Aorta (tissue), 5 donors: ENCODE measurements at regions of chr15 and their contacts with region 1.

Region 1: DNA sequence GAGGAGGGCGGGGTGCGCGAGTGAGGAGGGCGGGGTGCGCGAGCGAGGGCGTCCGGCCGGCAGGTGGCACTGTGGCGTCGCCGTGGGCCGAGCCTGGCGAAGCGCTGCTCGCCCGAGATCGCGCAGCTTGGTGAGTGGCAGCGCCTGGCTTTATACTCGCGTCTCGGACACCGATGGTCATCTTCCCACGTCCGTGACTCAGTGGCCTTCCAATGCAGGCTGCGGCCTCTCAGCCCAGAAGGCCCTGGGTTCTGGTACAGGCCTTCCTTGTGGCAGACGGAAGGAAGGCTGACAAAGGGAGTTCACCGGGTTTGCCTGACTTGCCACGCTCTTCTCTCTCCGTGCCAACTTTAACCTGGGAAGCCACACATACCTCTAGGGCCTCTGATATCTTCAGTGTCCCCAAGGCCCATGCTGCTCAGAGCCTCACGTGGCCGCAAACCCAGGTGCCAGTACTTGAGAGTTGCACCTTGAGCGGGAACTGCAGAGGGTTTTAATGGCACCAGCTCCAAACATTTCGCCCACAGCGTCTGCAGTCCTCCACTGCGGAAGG is 195.3 kb upstream of the LYSMD4 start:
- DNase-seq: peak; percentile 89 to 92
- ATAC-seq: peak; percentile 97
- H3K4me3 ChIP-seq: peak overlapping the region in 1 of 2 donors; percentile 12
- H3K27ac ChIP-seq: peak overlapping the region in 1 of 2 donors; percentile 43
- H3K4me1 ChIP-seq: no peaks in the 10 kb centered on the region
- H3K27me3 ChIP-seq: no peaks in the 10 kb centered on the region

Region 2: DNA sequence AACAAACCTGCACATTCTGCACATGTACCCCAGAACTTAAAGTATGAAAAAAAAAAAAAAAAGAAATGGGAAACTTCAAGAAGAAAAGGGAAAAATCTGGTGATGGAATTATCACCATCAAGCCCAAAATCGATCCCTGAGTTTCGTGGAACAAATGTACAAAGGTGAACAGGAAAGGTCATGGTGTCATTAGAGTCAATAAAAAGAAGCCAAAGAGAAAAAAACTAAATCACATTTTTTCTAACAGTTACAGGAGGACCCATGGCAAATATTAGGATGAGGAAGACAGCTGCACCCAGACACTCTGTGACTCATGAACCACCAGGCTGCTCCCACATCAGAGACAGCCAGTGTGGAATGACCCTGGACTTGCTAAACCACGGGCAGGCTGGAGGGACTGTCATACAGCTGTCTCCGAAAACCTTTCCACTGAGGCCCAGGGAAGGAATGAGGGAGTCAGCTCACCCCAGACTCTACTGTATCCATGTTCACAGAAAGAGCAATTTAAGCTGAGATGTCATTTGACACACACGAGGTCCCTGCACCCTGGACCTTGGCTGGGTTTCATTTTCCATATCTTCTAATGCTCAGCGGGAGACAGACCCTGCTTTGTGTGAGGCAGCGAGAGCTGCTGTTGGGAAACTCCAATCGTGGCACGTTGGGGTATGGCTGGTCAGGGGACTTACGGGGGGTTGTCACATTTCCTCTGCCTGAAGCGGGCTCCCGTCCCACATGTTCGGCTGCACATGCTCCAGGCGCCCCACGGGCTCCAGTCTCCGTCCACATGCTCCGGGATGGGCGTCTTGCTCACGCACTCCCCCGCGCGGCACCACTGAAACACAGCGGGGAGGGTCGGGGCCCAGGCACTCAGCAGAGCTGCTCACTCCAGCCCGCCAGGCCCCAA is 203.1 kb after region 1 on chr15:
- intact Hi-C with region 1: loop called in 1 of 2 experiments (anchors 2 kb)
- DNase-seq: peak; percentile 82 to 83
- ATAC-seq: peak; percentile 75
- H3K4me3 ChIP-seq: no peak overlapping the region
- H3K27ac ChIP-seq: no peak overlapping the region
- H3K4me1 ChIP-seq: no peaks in the 10 kb centered on the region
- H3K27me3 ChIP-seq: no peaks in the 10 kb centered on the region